GM18951 (cell line): ENCODE measurements at regions of chr1 and their contacts with region 1.

Region 1: DNA sequence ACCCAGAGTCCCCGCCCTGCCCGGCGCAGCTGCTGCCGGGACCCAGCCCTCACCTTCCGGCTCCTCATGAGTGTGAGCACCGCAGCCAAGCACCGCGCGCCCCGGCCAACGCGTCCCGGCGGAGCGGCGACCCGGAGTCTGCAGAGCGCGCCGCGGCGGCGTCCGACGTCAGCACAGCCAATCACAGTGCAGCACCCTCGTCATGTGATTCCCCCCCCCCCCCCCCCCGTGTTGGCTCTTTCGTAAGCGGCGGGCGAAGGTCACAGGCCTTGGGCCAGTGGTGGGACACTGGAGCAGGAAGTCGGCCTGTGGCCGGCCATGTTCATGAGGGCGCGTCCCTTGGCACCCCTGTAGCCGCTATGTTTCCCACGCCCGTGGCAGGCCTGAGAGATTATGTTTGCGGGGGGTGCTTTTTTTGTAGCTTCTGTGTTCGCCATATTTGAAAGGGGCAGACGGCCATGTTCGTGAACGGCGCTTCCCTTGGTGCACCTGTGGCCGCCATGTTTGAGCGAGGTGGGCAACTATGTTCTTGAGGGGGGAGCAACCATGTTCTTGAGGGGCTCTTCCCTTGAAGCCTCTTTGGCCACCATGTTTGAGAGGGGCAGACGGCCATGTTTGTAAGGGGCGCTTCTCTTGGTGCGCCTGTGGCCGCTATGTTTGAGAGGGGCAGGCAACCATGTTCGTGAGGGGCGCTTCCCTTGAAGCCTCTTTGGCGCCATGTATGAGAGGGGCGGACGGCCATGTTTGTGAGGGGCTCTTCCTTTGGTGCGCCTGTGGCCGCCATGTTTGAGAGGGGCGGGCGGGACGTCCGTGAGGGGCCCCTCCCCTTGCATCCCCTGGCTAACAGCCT is at the start of gene C1orf174:
- POLR2A ChIP-seq: peak; percentile 82

Region 2: DNA sequence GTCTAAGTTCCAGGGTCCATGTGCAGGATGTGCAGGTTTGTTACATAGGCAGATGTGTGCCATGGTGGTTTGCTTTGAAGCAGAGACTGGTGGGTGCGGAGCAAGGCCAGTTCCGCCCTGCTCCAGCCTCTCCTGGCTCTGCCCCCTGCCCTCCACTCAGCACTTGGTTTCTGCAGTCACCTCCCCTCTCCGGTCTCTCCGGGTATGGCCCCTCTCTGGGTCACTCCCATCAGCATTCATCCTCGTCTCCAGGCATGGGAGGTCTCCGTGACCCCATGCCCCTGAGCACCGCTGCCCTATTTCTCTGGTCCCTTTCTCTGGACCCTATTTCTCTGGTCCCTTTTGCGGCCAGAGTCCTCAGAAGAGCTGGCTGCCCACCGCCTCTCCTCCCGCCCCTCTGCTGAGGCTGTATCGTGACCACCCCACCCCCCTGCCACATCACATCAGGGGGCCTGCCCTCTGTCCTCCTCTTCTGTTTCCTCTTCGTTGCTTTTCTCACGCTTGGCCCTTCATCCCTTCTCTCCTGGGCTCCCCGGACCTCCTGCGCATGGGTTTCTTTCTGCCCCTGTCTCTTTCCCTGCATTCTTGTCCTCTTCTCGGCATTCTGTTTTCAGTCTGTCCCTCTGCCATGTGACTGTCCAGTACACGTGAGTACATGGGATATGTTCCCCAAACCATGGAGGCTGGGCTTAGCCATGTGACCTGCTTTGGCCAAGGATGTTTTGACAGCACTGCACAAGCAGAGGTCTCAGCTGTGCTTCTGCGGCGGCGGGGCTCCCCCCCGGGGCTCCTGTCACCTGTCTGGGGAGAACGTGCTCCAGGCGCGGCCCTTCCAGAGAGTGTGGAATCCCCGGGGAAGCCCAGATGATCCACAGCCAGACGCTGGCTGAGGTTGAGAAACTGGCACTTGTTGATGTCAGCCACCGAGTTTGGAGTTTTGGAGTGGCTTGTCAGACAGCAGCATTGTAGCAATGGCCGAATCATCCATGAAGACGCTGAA is 54.1 kb after region 1 on chr1:
- in situ Hi-C with region 1: no loop called
- POLR2A ChIP-seq: no peak

Region 3: GRCh38 chr1:3978990-3979325 is 78.6 kb after region 1 on chr1:
- in situ Hi-C with region 1: no loop called
- POLR2A ChIP-seq: no peak

Region 4: DNA sequence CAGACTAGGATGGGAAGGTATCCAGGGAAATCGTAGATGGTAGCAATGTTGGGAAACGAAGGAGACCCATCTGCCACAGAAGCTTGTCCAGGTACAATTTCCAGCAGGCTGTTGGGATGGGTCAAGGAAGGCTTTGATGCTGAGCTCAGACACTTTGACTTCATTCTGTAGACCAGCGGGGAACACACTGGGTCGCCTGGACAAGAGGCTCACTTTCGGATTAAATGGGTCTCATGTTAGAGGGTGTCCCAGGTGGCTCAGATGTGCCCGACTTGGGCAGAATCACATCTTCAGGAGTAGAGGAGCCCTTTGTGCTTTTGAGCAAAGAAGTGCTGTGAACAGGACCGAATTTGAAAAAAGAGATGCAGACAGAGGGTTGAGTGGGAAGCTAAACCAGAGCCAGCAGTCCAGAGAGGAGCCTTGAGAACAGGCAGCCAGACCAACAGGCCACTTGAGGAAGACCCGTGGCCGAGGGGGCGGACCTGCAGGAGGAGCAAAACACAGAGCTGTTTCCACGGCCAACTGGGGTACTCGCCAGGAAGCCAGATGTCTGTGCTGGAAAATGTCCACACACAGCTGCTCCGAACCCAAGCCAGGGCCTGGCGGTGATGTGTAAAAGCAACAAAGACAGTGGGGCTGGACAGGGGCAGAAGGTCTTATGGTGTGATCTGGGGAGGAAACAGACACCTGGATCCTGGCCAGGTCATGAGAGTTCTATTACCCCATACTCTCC is 901.0 kb after region 1 on chr1:
- in situ Hi-C with region 1: loop called (anchors 25 kb)
- POLR2A ChIP-seq: no peak